GM13976 (cell line): ENCODE measurements at regions of chr6 and their contacts with region 1.

Region 1: GRCh38 chr6:1396952-1397868 is 7.8 kb downstream of the FOXF2 start:
- DNase-seq: peak; percentile 87
- CTCF ChIP-seq: peak; percentile 89

Region 2: DNA sequence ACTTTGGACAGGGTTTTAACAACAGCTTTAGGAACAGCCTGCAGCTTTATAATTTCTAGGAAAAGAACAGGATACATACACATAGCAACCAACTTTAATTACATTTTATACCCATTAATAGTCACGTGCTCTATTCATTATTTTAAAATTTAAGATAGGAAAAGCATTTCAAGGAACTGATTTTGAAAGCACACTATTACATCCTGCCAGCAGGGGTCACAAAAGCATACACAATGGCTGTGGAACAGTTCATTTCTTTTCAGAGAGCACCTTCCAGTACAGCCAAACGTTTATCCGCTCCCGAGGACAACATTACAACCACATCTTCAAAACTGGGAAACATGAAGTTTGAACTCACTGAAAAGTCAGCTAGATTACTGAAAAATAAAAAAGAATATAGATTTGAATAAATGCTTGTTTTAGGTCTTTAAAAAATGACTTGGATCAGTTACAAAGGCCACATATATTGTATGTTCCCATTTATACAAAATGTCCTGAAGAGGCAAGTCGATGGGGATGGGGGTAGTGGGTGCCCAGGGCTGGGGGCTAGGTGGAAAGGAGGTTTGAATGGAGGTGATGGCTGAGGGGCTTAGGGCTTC is 599.6 kb before region 1 on chr6:
- in situ Hi-C with region 1: loop called (anchors 10 kb)
- DNase-seq: peak; percentile 55
- CTCF ChIP-seq: peak; percentile 51